ENCODE measurements at regions of chr1 and their contacts with region 1.

Region 1: DNA sequence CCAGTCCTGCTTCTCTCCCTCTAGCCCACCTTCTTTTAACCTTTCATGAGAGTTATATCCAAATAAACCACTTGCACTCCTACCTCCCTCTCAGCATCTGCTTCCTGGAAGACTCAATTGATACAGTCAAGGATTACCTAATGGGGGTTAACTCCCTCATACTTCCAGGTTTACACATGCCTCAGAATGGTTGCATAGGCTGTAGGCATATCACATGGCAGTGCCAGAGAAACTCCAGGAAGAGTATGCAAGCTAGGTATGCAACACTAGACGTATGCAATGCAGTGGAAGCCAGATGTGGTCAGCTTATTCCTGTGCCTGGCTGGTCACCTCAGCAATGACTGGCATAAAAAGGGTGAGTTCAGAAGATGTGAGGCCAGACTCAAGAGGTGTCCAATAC is 32.7 kb upstream of the VANGL1 start:
- DNase-seq: no peak
- H3K4me3 ChIP-seq: no peak overlapping the region
- H3K27ac ChIP-seq: no peak overlapping the region
- H3K4me1 ChIP-seq: no peaks in the 10 kb centered on the region
- H3K27me3 ChIP-seq: no peaks in the 10 kb centered on the region
- CTCF ChIP-seq: no peak

Region 2: GRCh38 chr1:115706587-115707425 is 97.8 kb after region 1 on chr1:
- intact Hi-C with region 1: loop called (anchors 5 kb)
- DNase-seq: no peak
- H3K4me3 ChIP-seq: no peak overlapping the region
- H3K27ac ChIP-seq: no peak overlapping the region
- H3K4me1 ChIP-seq: peaks cover 0 to 2% of the 10 kb centered on the region in 2 donors
- H3K27me3 ChIP-seq: no peaks in the 10 kb centered on the region
- CTCF ChIP-seq: peak; percentile 26 to 68 (median 43)